ENCODE measurements at regions of chr5 and their contacts with region 1.

Region 1: GRCh38 chr5:149775785-149776184 is 45.7 kb downstream of the PPARGC1B start:
- DNase-seq: no peak
- H3K4me3 ChIP-seq: no peak overlapping the region
- H3K27ac ChIP-seq: no peak overlapping the region
- H3K4me1 ChIP-seq: peaks cover 3 to 36% (median 22%) of the 10 kb centered on the region in 4 experiments
- H3K27me3 ChIP-seq: no peaks in the 10 kb centered on the region
- CTCF ChIP-seq: peak in 2 of 3 experiments; percentile 63 to 81; a peak in 3 of 4 replicates
- EP300 ChIP-seq: no peak
- POLR2A ChIP-seq: no peak
- RAD21 ChIP-seq: peak; percentile 62 to 65

Region 2: DNA sequence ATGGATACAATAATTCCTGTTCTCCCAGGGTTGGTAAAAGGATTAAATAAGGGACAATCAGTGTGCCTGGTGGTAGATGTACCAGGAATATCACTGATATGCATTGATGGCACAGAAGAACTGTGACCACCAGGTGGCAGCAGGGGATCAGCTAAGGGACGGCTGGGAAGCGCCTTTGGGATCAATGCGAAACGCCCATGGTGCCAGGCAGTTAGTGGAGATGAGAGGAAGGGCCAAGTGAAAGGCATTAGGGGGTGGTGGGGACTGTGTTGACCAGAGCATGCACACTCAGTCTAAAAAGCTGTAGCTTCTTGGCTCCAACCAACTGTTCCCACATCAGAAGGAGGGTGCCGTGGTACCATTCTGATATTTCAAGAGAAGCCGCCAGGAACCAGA is 138.9 kb before region 1 on chr5:
- CTCF ChIA-PET with region 1: interaction called, 16 read pairs
- POLR2A ChIA-PET with region 1: no interaction called
- DNase-seq: peak; percentile 49 to 83
- H3K4me3 ChIP-seq: no peak overlapping the region
- H3K27ac ChIP-seq: no peak overlapping the region
- H3K4me1 ChIP-seq: peaks cover 12 to 16% (median 12%) of the 10 kb centered on the region in 4 experiments
- H3K27me3 ChIP-seq: no peaks in the 10 kb centered on the region; a peak in 1 of 7 replicates
- CTCF ChIP-seq: peak; percentile 85 to 93 (median 91)
- EP300 ChIP-seq: no peak
- POLR2A ChIP-seq: no peak
- RAD21 ChIP-seq: peak; percentile 97 to 98

Region 3: GRCh38 chr5:149667084-149667828 is 108.5 kb before region 1 on chr5:
- CTCF ChIA-PET with region 1: interaction called, 59 read pairs
- POLR2A ChIA-PET with region 1: no interaction called
- DNase-seq: peak in 1 of 2 experiments; percentile 77
- H3K4me3 ChIP-seq: no peak overlapping the region
- H3K27ac ChIP-seq: no peak overlapping the region
- H3K4me1 ChIP-seq: no peaks in the 10 kb centered on the region
- H3K27me3 ChIP-seq: no peaks in the 10 kb centered on the region
- CTCF ChIP-seq: peak; percentile 62 to 87 (median 73)
- EP300 ChIP-seq: no peak
- POLR2A ChIP-seq: no peak
- RAD21 ChIP-seq: peak; percentile 64 to 77

Region 4: GRCh38 chr5:149731639-149732323 is 44.0 kb before region 1 on chr5:
- CTCF ChIA-PET with region 1: interaction called, 10 read pairs
- POLR2A ChIA-PET with region 1: no interaction called
- DNase-seq: peak; percentile 53 to 68
- H3K4me3 ChIP-seq: peak overlapping the region; percentile 60 to 93 (median 64)
- H3K27ac ChIP-seq: no peak overlapping the region
- H3K4me1 ChIP-seq: peaks cover 2 to 11% (median 4%) of the 10 kb centered on the region in 4 experiments; a peak in 5 of 7 replicates
- H3K27me3 ChIP-seq: peaks cover 0 to 21% (median 12%) of the 10 kb centered on the region in 4 experiments; a peak in 5 of 7 replicates
- CTCF ChIP-seq: no peak
- EP300 ChIP-seq: no peak
- POLR2A ChIP-seq: no peak
- RAD21 ChIP-seq: no peak

Region 5: DNA sequence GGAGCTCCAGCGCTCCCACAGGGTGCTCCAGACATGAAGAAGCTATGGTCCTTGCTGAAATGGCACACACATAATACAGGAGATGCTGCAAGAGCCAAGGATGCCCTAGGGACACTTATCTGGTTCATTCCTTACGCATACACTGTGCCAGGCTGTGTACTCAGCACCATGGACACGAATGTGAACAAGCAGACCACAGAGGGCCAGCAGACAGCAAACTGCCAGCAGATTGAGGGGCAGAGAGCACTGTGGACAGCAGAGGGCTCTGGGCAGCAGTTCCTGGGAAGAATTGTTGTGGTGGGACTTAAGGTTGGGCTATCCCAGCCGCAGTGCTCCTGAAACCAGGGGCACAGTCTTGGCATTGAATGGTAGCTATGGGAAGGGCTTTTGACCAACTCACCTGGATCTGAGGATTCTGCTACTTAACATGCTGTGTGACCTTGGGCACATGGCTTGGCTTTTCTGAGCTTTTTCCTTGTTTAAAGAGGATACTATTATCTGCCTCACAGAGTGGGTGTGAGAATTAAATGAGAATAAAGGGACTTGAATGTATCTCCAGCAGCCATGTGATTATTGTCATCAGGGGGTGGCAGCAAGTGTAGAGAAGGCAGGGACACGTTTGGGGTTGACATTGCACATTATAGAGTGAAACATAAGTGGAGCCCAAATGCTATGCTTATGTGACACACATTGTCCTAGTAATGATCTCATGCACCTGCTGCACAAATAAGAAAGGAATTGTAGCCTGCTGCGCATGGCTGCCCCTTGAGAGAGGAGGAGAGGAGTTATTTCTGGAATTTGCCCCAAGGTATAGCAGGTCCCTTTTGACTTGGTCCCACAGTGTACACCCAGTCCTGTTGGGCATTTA is 15.6 kb before region 1 on chr5:
- CTCF ChIA-PET with region 1: interaction called, 70 read pairs
- POLR2A ChIA-PET with region 1: interaction called, 3 read pairs
- DNase-seq: no peak
- H3K4me3 ChIP-seq: no peak overlapping the region
- H3K27ac ChIP-seq: no peak overlapping the region
- H3K4me1 ChIP-seq: peaks cover 0 to 6% (median 2%) of the 10 kb centered on the region in 4 experiments; a peak in 1 of 7 replicates
- H3K27me3 ChIP-seq: no peaks in the 10 kb centered on the region
- CTCF ChIP-seq: peak in 2 of 3 experiments; percentile 12 to 40; a peak in 1 of 4 replicates
- EP300 ChIP-seq: no peak
- POLR2A ChIP-seq: no peak
- RAD21 ChIP-seq: peak in 1 of 2 experiments; percentile 32; a peak in 2 of 4 replicates

Region 6: GRCh38 chr5:149799119-149799623 is 23.4 kb after region 1 on chr5:
- CTCF ChIA-PET with region 1: interaction called, 43 read pairs
- POLR2A ChIA-PET with region 1: no interaction called
- DNase-seq: no peak
- H3K4me3 ChIP-seq: no peak overlapping the region
- H3K27ac ChIP-seq: no peak overlapping the region
- H3K4me1 ChIP-seq: peaks cover 0 to 5% (median 0%) of the 10 kb centered on the region in 4 experiments; a peak in 1 of 7 replicates
- H3K27me3 ChIP-seq: no peaks in the 10 kb centered on the region
- CTCF ChIP-seq: no peak
- EP300 ChIP-seq: no peak
- POLR2A ChIP-seq: no peak
- RAD21 ChIP-seq: no peak

Region 7: GRCh38 chr5:149828161-149828884 is 52.5 kb after region 1 on chr5:
- CTCF ChIA-PET with region 1: interaction called, 37 read pairs
- POLR2A ChIA-PET with region 1: no interaction called
- DNase-seq: peak; percentile 73 to 94
- H3K4me3 ChIP-seq: no peak overlapping the region
- H3K27ac ChIP-seq: no peak overlapping the region
- H3K4me1 ChIP-seq: no peaks in the 10 kb centered on the region
- H3K27me3 ChIP-seq: no peaks in the 10 kb centered on the region
- CTCF ChIP-seq: peak; percentile 54 to 96 (median 88)
- EP300 ChIP-seq: no peak
- POLR2A ChIP-seq: no peak
- RAD21 ChIP-seq: peak; percentile 92 to 94

Measured in H1 (cell line).